Left ventricle myocardium superior (tissue), 1 donor: ENCODE measurements at regions of chr2 and their contacts with region 1.

Region 1: DNA sequence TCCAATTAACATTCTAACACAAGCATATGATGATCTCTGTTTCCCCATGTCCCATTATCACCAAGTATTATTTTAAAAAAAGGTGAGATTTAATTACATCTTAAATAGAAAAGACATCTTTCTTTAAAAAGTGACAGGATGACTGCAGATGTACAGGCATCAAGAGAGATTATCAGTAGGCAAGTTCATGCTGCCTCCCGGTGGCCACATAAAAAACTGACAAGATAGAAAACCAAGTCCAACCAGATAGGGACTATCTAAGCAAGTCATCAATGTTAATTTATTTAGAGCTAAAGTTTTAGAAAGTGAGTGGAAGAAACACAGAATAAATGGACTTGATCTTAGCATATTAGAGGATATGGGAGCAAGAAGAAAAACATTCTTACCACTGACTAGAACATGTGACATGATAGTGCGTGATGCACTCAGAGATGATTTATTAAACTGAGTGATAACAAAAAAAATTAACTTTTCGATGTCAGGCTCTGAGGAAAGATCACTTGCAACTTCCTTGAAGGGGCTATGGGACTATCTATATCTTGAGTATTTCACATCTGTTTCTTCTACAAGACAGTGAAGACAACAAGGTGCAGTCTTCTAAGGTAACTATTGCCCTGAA is 5.4 kb upstream of the TDRD15 start:
- DNase-seq: no peak
- ATAC-seq: no peak

Region 2: DNA sequence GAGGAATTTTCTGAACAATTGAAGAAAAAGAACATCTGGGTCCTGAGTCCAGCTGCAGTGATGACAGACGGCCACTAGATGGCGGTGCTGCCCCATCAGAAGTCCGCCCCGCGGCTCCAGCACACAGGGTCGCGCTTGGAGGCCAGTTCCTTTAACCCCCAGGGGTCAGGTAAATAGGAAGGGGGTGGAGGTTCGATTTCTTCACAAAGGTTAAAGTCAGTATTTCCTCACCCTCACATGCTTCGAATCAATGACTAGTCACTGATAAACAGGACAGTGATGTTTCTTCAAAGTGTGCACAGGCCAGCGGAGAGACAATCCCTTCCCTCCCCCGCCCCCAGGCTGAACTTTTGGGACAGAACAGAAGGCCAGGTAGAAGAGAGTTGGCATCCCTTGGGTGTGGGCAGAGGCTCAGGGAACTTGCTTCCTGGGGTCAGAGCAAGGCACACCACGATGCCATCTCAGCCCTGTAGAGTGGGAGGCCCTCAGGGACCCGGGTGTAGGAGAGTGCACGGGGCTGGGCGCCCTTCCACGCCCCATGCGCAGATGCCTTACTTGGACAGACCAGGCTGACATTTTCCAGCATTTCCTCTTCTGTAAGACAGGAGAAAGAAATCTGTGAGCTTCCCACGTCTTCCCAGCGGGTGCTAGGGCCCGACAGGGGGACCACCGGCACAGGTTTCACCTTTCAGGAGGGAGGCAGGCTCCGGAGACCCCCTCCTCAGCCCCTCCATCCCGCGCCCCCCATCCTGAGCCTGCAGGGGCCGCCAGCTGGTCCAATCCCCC is 75.3 kb before region 1 on chr2:
- intact Hi-C with region 1: loop called (anchors 2 kb)
- DNase-seq: peak; percentile 79
- ATAC-seq: peak; percentile 69